GM12878 (cell line): ENCODE measurements at regions of chr1 and their contacts with region 1.

Region 1: GRCh38 chr1:170664828-170665612 is 1.1 kb downstream of the PRRX1 start:
- DNase-seq: no peak
- ATAC-seq: peak; percentile 47
- H3K4me3 ChIP-seq: no peak overlapping the region
- H3K27ac ChIP-seq: no peak overlapping the region
- H3K4me1 ChIP-seq: no peaks in the 10 kb centered on the region
- H3K27me3 ChIP-seq: peaks cover 13 to 42% of the 10 kb centered on the region in 2 experiments
- CTCF ChIP-seq: 0 out of 6 replicates have a peak, but pooled peaks of 1 of the 3 experiments have one; percentile 4
- EP300 ChIP-seq: no peak
- POLR2A ChIP-seq: no peak
- RAD21 ChIP-seq: no peak

Region 2: DNA sequence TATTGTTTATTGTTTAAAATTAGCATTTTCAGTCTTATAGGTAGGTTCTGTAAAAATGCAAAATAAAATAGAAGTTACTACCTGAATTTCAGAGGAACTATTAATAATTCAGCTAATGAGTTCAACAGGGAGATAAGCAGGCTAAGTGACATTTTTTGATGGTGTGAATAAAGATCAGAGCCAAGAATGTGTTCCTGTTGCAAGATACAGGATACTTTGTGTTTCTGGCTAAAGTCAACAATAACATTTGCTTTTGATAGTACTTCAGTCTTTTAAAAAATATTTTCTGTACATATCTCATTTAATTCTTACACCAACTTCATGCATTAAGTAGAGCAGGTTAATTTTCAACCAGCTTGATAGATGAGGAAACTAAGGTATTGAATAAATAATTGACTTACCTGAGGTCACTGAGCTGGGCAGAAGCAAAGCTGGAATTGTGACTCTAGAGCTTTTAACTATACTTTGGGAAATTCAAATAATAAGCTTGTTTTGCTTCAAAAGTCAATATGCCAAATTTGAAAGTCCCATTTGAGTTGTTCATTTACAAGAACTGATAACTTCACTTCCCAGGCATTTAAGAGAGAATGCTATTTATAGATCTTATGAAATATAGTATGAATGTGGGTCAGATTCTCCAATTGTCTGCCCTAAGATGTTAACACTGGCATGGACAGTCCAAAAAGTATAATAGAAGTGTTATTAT is 127.1 kb before region 1 on chr1:
- CTCF ChIA-PET with region 1: interaction called, 7 read pairs
- POLR2A ChIA-PET with region 1: interaction called, 50 read pairs
- RAD21 ChIA-PET with region 1: interaction called, 41 read pairs
- SMC1A ChIA-PET with region 1: interaction called, 112 read pairs
- in situ Hi-C with region 1: no loop called
- intact Hi-C with region 1: loop called (anchors 2 kb)
- DNase-seq: no peak
- ATAC-seq: no peak
- H3K4me3 ChIP-seq: no peak overlapping the region
- H3K27ac ChIP-seq: no peak overlapping the region
- H3K4me1 ChIP-seq: no peaks in the 10 kb centered on the region
- H3K27me3 ChIP-seq: no peaks in the 10 kb centered on the region
- CTCF ChIP-seq: no peak
- EP300 ChIP-seq: no peak
- POLR2A ChIP-seq: no peak
- RAD21 ChIP-seq: no peak

Region 3: DNA sequence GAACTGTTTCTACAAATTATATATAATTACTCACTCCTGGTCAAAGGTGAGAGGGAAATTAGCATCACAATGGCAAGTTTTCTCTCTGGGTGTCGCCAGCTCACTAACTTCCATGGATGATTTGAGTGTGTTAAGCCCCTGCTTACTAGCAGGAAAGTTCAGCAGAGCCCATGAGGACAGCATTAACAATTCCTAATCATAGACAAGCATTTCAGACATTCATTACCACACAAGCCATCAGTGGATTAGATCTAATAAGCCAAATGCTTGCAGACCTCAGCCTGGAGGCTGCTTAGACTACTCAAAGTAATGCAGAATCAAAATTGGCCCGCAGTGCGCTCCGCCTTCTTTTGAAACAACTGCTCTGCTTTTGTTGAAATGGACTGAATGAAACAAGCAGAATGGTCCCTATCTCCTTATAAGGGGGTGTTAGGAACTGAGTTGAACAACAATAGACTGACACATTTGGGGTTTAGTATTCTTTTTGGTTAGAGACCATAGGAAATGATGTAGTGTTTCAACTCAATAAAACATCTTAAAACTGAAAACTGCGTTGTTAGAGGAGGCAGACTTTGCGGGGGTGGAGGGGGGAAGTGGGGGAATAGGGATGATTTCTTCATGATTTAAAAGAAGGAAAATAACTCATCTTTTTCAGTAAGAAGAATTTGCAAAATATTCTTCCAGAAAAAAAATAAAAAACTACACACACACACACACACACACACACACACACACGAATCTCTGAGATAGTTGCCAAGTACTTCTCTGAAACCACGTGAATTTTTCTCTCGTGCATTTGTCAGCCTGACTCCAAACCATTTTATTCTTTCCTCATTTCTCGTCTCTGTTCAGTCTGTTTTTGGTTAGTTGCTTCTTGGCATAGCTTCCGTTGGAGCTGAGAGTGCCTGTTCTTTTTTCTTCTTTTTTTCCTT is 78.4 kb before region 1 on chr1:
- CTCF ChIA-PET with region 1: interaction called, 6 read pairs
- POLR2A ChIA-PET with region 1: interaction called, 6 read pairs
- RAD21 ChIA-PET with region 1: interaction called, 46 read pairs
- SMC1A ChIA-PET with region 1: interaction called, 35 read pairs
- in situ Hi-C with region 1: no loop called
- intact Hi-C with region 1: loop called (anchors 10 kb)
- DNase-seq: no peak
- ATAC-seq: peak; percentile 74
- H3K4me3 ChIP-seq: no peak overlapping the region
- H3K27ac ChIP-seq: no peak overlapping the region
- H3K4me1 ChIP-seq: no peaks in the 10 kb centered on the region
- H3K27me3 ChIP-seq: no peaks in the 10 kb centered on the region
- CTCF ChIP-seq: no peak
- EP300 ChIP-seq: no peak
- POLR2A ChIP-seq: no peak
- RAD21 ChIP-seq: no peak

Region 4: DNA sequence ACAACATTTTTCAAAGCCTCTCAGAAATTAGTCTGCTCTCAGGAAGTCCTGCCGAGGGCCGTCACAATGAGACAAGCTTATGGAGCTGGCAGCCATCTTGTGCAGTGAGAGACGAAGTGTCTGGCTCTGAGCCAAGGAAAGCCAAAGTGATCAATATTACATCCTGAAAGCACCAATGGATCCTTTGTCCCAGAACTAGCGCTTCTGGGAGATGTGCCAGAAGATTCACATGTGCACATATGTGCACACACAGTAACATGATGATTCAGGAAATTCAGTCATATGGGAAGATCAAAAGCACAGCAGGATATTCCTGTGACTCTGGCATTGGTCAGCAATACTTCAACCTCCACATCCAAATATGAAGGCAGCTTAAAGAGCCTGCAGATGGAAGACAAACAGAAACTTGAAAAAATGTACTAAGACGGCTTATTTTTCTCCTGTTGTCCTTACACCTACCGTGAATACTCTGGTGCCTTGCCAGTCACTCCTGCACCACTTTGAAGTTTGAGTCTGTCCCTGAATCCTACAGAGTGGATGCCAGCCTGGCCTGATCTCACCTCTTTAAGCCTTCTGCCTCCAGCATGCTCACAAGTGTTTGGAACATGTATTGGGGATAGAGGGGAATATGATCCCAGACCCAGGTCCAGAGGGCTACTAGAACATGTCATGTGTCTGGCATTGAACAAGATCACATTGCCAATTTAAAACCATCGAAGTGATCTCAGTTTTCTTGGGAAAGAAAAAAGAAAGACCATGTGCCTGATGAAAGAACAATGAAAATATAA is 45.6 kb before region 1 on chr1:
- CTCF ChIA-PET with region 1: interaction called, 5 read pairs
- POLR2A ChIA-PET with region 1: interaction called, 27 read pairs
- RAD21 ChIA-PET with region 1: interaction called, 8 read pairs
- SMC1A ChIA-PET with region 1: interaction called, 150 read pairs
- in situ Hi-C with region 1: no loop called
- intact Hi-C with region 1: no loop called
- DNase-seq: no peak
- ATAC-seq: no peak
- H3K4me3 ChIP-seq: no peak overlapping the region
- H3K27ac ChIP-seq: no peak overlapping the region
- H3K4me1 ChIP-seq: no peaks in the 10 kb centered on the region
- H3K27me3 ChIP-seq: no peaks in the 10 kb centered on the region; a peak in 1 of 4 replicates
- CTCF ChIP-seq: no peak
- EP300 ChIP-seq: no peak
- POLR2A ChIP-seq: no peak
- RAD21 ChIP-seq: no peak

Region 5: GRCh38 chr1:170640581-170640980 is 24.4 kb before region 1 on chr1:
- CTCF ChIA-PET with region 1: no interaction called
- POLR2A ChIA-PET with region 1: no interaction called
- RAD21 ChIA-PET with region 1: interaction called, 9 read pairs
- SMC1A ChIA-PET with region 1: interaction called, 150 read pairs
- in situ Hi-C with region 1: no loop called
- intact Hi-C with region 1: no loop called
- DNase-seq: no peak
- ATAC-seq: peak; percentile 49; the same call in 2 of the 3 replicates
- H3K4me3 ChIP-seq: no peak overlapping the region
- H3K27ac ChIP-seq: no peak overlapping the region
- H3K4me1 ChIP-seq: no peaks in the 10 kb centered on the region
- H3K27me3 ChIP-seq: no peaks in the 10 kb centered on the region
- CTCF ChIP-seq: no peak
- EP300 ChIP-seq: no peak
- POLR2A ChIP-seq: no peak
- RAD21 ChIP-seq: no peak

Region 6: DNA sequence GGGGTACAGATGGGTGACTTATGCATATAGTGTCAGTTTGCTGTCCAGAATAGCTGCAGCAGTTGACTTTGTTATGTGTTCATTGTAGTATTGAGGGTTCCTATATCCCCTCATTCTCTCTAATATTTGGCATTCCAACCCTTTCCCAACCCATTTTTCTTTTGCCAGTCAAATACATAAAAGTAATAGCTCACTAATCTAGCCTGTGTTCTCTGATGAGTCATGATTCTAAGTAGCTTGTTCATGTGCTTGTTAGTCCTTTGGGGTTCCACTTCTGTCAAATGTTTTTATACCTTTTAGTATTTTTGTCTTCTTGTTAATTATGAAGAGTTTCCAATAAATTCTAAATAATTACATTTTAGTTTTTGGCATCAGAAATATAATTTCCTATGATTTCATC is 171.1 kb after region 1 on chr1:
- CTCF ChIA-PET with region 1: no interaction called
- POLR2A ChIA-PET with region 1: no interaction called
- RAD21 ChIA-PET with region 1: no interaction called
- SMC1A ChIA-PET with region 1: no interaction called
- in situ Hi-C with region 1: no loop called
- intact Hi-C with region 1: no loop called
- DNase-seq: no peak
- ATAC-seq: no peak
- H3K4me3 ChIP-seq: no peak overlapping the region
- H3K27ac ChIP-seq: no peak overlapping the region
- H3K4me1 ChIP-seq: no peaks in the 10 kb centered on the region
- H3K27me3 ChIP-seq: no peaks in the 10 kb centered on the region
- CTCF ChIP-seq: no peak
- EP300 ChIP-seq: no peak
- POLR2A ChIP-seq: no peak
- RAD21 ChIP-seq: no peak